Activated T-helper 2 cell treated with anti-CD3 and anti-CD28 coated beads, Interferon-gamma antibody, Interleukin-2, Interleukin-4, amounts not matched to agents 10 μg/mL and 5 μg/mL and 100 μg/mL, durations not matched to agents 14 hours and 24 hours and 36 hours (primary cell): ENCODE measurements at regions of chr1 and their contacts with region 1.

Region 1: GRCh38 chr1:224203243-224204016 is 20.4 kb downstream of the DEGS1 start:
- DNase-seq: no peak
- H3K4me3 Mint-ChIP-seq: no peak overlapping the region
- H3K27ac Mint-ChIP-seq: no peak overlapping the region
- H3K4me1 Mint-ChIP-seq: peaks cover 13% of the 10 kb centered on the region
- H3K27me3 Mint-ChIP-seq: no peaks in the 10 kb centered on the region

Region 2: GRCh38 chr1:224168859-224169380 is 34.5 kb before region 1 on chr1:
- intact Hi-C with region 1: loop called (anchors 5 kb)
- DNase-seq: peak; percentile 37
- H3K4me3 Mint-ChIP-seq: peak overlapping the region; percentile 50
- H3K27ac Mint-ChIP-seq: peak overlapping the region; percentile 83
- H3K4me1 Mint-ChIP-seq: peaks cover 36% of the 10 kb centered on the region
- H3K27me3 Mint-ChIP-seq: peaks cover 7% of the 10 kb centered on the region